ENCODE measurements at regions of chr22 and their contacts with region 1.

Region 1: GRCh38 chr22:38766076-38766777 is 10.4 kb upstream of the SUN2 start:
- DNase-seq: peak; percentile 61
- H3K4me3 Mint-ChIP-seq: no peak overlapping the region
- H3K27ac Mint-ChIP-seq: no peak overlapping the region
- H3K4me1 Mint-ChIP-seq: peaks cover 4% of the 10 kb centered on the region
- H3K27me3 Mint-ChIP-seq: peaks cover 24% of the 10 kb centered on the region

Region 2: GRCh38 chr22:38554281-38554680 is 211.9 kb before region 1 on chr22:
- CTCF ChIA-PET with region 1: no interaction called
- DNase-seq: no peak
- H3K4me3 Mint-ChIP-seq: no peak overlapping the region
- H3K27ac Mint-ChIP-seq: no peak overlapping the region
- H3K4me1 Mint-ChIP-seq: no peaks in the 10 kb centered on the region
- H3K27me3 Mint-ChIP-seq: no peaks in the 10 kb centered on the region

Region 3: GRCh38 chr22:38793721-38794466 is 27.7 kb after region 1 on chr22 and contains the start of gene DNAL4:
- CTCF ChIA-PET with region 1: interaction called, 10 read pairs
- DNase-seq: peak; percentile 96
- H3K4me3 Mint-ChIP-seq: peak within 1 kb of the TSS; percentile 82
- H3K27ac Mint-ChIP-seq: peak within 1 kb of the TSS; percentile 71
- H3K4me1 Mint-ChIP-seq: peaks cover 28% of the 10 kb centered on the region
- H3K27me3 Mint-ChIP-seq: peaks cover 31% of the 10 kb centered on the region

Region 4: DNA sequence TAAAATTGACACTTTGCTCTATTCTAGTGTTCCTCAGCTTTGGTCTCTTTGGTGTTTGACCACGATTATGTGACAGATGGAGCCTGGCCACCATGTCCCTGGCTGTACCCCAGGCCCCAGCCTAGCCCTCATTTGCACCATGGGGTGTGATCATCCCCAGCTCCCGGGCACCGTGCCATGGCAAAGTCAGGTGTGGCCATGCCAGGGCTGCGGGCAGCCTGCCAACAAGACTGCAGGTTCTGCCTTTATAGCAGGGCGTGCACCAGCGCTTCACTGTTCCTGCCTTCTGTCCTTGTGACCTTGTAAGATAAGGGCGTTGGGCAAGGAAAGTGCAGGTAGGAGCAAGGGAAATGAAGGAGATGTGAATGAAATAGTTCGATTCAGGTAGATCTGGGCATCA is 168.8 kb after region 1 on chr22:
- CTCF ChIA-PET with region 1: no interaction called
- DNase-seq: no peak
- H3K4me3 Mint-ChIP-seq: no peak overlapping the region
- H3K27ac Mint-ChIP-seq: no peak overlapping the region
- H3K4me1 Mint-ChIP-seq: no peaks in the 10 kb centered on the region
- H3K27me3 Mint-ChIP-seq: peaks cover 37% of the 10 kb centered on the region

Measured in activated naive CD4-positive, alpha-beta T cell treated with anti-CD3 and anti-CD28 coated beads, Interleukin-2, amount 10 ng/mL, durations not matched to agents 7 days and 5 days (primary cell).